ENCODE measurements at regions of chr5 and their contacts with region 1.

Region 1: DNA sequence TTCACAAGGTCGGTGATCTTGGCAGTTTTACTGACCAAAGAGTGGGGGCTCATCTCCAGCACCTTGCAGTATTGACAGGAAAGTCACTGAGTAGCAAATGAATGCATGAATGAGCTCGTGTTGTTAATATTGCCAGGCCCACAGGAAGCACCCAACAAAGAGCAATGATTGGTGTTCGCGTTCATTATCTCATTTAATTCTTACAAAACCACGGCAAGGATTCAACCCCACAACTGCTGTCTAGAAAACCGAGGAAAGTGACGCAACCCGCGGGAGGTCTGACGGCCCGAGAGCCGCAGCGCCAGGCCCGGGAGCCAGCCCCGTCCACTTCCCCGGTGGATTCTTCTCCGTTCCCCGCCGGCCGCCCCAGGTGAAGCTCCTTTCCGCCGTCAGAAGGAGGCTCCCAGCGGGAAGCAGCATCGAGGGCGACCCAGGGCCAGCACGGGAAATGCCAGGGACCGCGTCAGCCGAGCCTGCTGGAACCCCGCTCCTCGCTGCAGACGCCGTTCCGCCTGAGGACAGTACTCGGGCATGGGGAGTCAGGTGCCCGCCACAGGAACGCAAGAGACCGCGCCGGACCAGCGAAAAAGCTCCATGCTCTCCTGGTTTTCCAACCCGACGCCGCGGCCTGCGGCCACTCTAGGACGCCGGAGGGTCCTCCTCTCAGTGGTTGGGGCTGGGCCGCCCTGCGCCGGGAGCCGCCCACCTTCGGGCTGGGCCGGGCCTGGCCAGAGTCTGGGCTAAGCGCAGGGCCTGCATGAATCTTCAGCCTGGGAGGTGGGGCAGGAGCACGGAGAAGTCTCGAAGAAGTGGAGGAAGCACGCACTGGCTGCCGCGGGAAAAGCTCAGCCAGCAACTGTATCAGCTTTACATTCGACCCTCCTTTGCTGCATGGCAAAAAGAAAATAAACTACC is 19.8 kb upstream of the FER start:
- DNase-seq: peak in 8 of 9 experiments; percentile 21 to 70 (median 46)
- ATAC-seq: peak; percentile 70
- H3K4me3 ChIP-seq: peak overlapping the region; percentile 85 to 87
- H3K4me3 Mint-ChIP-seq: peak overlapping the region; percentile 90
- H3K27ac ChIP-seq: peak overlapping the region; percentile 52 to 60
- H3K27ac Mint-ChIP-seq: peak overlapping the region; percentile 56
- H3K4me1 ChIP-seq: peaks cover 6% of the 10 kb centered on the region
- H3K4me1 Mint-ChIP-seq: peaks cover 24% of the 10 kb centered on the region
- H3K27me3 ChIP-seq: peaks cover 0 to 3% of the 10 kb centered on the region in 2 experiments
- H3K27me3 Mint-ChIP-seq: peaks cover 21% of the 10 kb centered on the region
- CTCF ChIP-seq: no peak

Region 2: DNA sequence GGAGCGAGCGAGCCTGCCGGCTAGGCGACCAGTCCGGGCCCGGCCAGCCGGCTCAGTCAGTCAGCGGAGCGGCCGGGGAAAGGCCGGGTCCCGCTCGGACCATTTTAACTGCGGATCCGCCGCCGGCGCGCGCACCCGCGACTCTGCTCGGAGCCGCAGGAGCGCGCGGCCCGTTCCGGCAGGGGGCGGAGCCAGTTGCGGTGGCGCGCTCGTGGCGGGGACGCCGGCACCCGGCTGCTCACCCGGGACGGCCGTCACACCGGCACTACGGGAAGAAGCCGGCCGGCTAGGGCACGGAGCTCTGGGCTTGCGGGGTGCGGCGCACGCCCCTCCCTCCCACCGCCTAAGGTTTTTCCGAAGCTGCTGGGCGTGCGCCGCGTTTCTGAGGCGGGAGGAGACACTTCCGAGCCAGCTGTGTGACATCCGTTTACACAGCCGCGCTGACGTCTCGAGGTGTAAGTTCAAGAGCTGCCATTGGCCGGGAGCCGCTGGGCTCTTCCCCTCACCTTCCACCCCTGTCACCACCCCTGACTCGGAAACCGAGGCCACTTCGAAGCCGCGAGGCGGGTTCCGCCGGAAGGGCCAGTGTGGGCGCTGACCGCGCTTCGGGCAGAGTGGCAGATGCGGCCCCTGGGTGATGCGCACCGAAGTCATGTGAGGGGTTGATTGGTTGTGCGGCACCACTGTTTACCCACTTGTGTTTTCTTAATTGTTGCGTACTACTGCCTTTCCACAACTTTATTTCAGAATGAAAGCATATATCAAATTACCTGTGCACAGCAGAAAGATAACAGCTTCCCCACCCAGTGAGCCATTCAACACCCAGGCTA is 345.7 kb before region 1 on chr5 and contains the start of gene FBXL17:
- CTCF ChIA-PET with region 1: no interaction called
- POLR2A ChIA-PET with region 1: no interaction called
- intact Hi-C with region 1: loop called in 1 of 2 experiments (anchors 5 kb)
- DNase-seq: peak; percentile 83 to 97 (median 90)
- ATAC-seq: peak; percentile 75
- H3K4me3 ChIP-seq: peak within 1 kb of the TSS; percentile 59 to 63
- H3K4me3 Mint-ChIP-seq: peak within 1 kb of the TSS; percentile 94
- H3K27ac ChIP-seq: peak within 1 kb of the TSS; percentile 84 to 86
- H3K27ac Mint-ChIP-seq: peak within 1 kb of the TSS; percentile 99
- H3K4me1 ChIP-seq: peaks cover 11% of the 10 kb centered on the region
- H3K4me1 Mint-ChIP-seq: peaks cover 36% of the 10 kb centered on the region
- H3K27me3 ChIP-seq: no peaks in the 10 kb centered on the region
- H3K27me3 Mint-ChIP-seq: no peaks in the 10 kb centered on the region
- CTCF ChIP-seq: no peak
- total RNA-seq, gene FBXL17: 13.5 to 17.9 TPM

Region 3: DNA sequence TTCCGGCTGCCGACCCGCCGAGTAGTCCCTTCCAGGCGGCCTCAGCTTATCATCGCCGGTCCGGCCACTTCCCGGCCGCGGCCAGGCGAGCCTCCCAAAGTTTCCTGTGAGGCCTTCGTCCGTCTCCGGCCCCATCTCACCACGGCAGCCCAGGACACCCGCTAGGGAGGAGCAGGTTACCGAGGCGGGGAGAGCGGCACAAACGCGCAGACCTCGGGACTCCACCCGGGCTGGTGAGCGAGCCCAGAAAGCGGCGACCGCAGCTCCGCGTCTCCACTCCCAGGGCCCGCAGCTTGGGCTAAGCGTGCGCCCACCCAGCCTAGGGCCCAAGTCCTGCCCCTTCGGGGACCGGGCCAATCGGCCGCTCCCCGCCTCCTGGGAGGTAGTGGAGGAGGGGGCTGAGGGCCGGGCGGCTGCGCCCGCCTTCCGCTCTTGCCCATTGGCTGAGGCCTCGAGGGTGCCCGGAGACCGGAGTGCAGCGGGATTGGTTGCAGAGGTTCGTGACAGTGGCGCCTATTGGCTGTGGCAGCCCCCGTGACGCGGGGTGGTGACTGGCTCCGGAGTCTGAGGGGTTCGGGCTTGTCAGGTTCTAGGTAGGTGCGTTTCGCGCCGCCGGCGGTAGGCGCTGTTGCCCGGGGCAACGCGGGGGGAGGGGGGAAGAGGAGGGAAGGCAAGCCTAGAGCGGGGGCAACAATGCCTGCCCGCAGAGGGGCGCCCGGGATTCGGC is 20.7 kb after region 1 on chr5:
- CTCF ChIA-PET with region 1: interaction called, 3 read pairs
- POLR2A ChIA-PET with region 1: interaction called, 17 read pairs
- intact Hi-C with region 1: loop called (anchors 1 to 2 kb)
- DNase-seq: peak; percentile 95 to 99 (median 98)
- ATAC-seq: peak; percentile 90
- H3K4me3 ChIP-seq: peak overlapping the region; percentile 86 to 98
- H3K4me3 Mint-ChIP-seq: peak overlapping the region; percentile 87
- H3K27ac ChIP-seq: peak overlapping the region; percentile 82 to 88
- H3K27ac Mint-ChIP-seq: peak overlapping the region; percentile 96
- H3K4me1 ChIP-seq: no peaks in the 10 kb centered on the region
- H3K4me1 Mint-ChIP-seq: peaks cover 12% of the 10 kb centered on the region
- H3K27me3 ChIP-seq: no peaks in the 10 kb centered on the region
- H3K27me3 Mint-ChIP-seq: peaks cover 2% of the 10 kb centered on the region
- CTCF ChIP-seq: no peak

Region 4: DNA sequence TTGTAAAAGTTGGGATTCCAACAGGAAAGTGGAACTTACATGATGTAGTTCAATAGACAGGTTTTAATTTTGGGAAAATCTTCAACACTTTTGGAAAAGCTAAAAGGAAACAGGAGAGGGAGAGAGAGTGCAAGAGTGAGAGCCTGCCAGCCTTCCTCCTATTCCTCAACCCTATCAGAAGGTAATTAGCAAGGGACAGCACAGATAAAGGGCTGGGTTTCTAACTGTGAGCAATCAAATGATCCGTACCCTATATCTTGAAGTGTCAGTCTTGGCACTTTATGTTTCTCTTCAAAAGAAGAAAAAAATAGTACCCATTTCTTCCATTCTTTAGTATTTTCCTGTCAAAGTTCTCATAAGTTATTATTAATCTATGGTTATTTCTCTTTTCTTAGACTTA is 99.2 kb after region 1 on chr5:
- CTCF ChIA-PET with region 1: no interaction called
- POLR2A ChIA-PET with region 1: no interaction called
- intact Hi-C with region 1: loop called in 1 of 2 experiments (anchors 5 kb)
- DNase-seq: no peak
- ATAC-seq: no peak
- H3K4me3 ChIP-seq: no peak overlapping the region
- H3K4me3 Mint-ChIP-seq: no peak overlapping the region
- H3K27ac ChIP-seq: no peak overlapping the region
- H3K27ac Mint-ChIP-seq: no peak overlapping the region
- H3K4me1 ChIP-seq: no peaks in the 10 kb centered on the region
- H3K4me1 Mint-ChIP-seq: no peaks in the 10 kb centered on the region
- H3K27me3 ChIP-seq: no peaks in the 10 kb centered on the region
- H3K27me3 Mint-ChIP-seq: no peaks in the 10 kb centered on the region
- CTCF ChIP-seq: no peak

Region 5: DNA sequence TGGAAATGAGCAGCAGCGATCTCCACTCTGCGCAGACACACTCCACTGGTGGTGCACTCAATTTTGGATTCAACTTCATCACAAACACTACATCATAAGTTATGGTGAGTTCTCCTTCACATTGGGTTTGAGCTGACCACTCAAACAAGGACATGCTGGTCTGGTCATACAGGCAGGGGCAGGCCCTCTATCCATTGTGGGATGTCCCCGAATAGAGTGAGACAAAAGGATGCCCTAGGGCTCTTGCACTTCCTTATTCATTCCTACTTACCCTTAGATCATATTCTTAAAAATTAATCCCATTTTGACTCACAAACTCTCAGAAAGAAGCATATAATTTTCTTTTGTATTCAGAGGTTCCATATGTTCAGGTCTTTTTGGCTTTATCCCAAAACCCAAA is 698.2 kb after region 1 on chr5:
- CTCF ChIA-PET with region 1: no interaction called
- POLR2A ChIA-PET with region 1: no interaction called
- intact Hi-C with region 1: no loop called
- DNase-seq: no peak
- ATAC-seq: no peak
- H3K4me3 ChIP-seq: no peak overlapping the region
- H3K4me3 Mint-ChIP-seq: no peak overlapping the region
- H3K27ac ChIP-seq: no peak overlapping the region
- H3K27ac Mint-ChIP-seq: no peak overlapping the region
- H3K4me1 ChIP-seq: no peaks in the 10 kb centered on the region
- H3K4me1 Mint-ChIP-seq: no peaks in the 10 kb centered on the region
- H3K27me3 ChIP-seq: no peaks in the 10 kb centered on the region
- H3K27me3 Mint-ChIP-seq: peaks cover 7% of the 10 kb centered on the region
- CTCF ChIP-seq: no peak

Measured in CD8-positive, alpha-beta T cell (primary cell).